ENCODE measurements at regions of chr20 and their contacts with region 1.

Region 1: GRCh38 chr20:16107172-16107870 is 465.9 kb downstream of the KIF16B start:
- DNase-seq: no peak
- H3K4me3 ChIP-seq: no peak overlapping the region
- H3K27ac ChIP-seq: no peak overlapping the region
- H3K4me1 ChIP-seq: peaks cover 21% of the 10 kb centered on the region
- CTCF ChIP-seq: no peak

Region 2: GRCh38 chr20:15986690-15987089 is 120.6 kb before region 1 on chr20:
- CTCF ChIA-PET with region 1: no interaction called
- POLR2A ChIA-PET with region 1: no interaction called
- intact Hi-C with region 1: loop called (anchors 5 kb)
- DNase-seq: no peak
- H3K4me3 ChIP-seq: no peak overlapping the region
- H3K27ac ChIP-seq: no peak overlapping the region
- H3K4me1 ChIP-seq: no peaks in the 10 kb centered on the region
- CTCF ChIP-seq: no peak

Region 3: DNA sequence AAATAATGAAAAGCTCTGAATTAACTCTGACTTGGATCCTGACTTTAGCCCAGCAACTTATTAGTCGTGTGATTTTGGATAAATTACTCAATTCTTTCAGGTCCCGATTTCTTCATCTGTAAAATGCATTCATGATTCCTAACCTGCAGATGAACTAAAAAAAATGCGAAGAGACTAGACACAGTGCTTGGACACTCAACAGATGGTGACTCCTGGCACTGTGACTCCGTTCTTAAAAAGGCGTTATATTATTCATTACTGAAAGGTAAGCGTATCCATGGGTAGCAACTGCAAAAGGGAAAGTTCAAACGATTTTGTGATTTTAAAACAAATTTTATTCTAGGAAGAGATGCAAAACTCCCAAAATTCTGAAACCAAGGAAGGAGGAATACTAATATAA is 239.6 kb after region 1 on chr20:
- CTCF ChIA-PET with region 1: no interaction called
- POLR2A ChIA-PET with region 1: no interaction called
- intact Hi-C with region 1: no loop called
- DNase-seq: no peak
- H3K4me3 ChIP-seq: no peak overlapping the region
- H3K27ac ChIP-seq: no peak overlapping the region
- H3K4me1 ChIP-seq: no peaks in the 10 kb centered on the region
- CTCF ChIP-seq: no peak